Activated CD4-positive, alpha-beta T cell treated with anti-CD3 and anti-CD28 coated beads, Interleukin-2, amount 10 ng/mL, durations not matched to agents 24 days and 14 days (primary cell): ENCODE measurements at regions of chr6 and their contacts with region 1.

Region 1: DNA sequence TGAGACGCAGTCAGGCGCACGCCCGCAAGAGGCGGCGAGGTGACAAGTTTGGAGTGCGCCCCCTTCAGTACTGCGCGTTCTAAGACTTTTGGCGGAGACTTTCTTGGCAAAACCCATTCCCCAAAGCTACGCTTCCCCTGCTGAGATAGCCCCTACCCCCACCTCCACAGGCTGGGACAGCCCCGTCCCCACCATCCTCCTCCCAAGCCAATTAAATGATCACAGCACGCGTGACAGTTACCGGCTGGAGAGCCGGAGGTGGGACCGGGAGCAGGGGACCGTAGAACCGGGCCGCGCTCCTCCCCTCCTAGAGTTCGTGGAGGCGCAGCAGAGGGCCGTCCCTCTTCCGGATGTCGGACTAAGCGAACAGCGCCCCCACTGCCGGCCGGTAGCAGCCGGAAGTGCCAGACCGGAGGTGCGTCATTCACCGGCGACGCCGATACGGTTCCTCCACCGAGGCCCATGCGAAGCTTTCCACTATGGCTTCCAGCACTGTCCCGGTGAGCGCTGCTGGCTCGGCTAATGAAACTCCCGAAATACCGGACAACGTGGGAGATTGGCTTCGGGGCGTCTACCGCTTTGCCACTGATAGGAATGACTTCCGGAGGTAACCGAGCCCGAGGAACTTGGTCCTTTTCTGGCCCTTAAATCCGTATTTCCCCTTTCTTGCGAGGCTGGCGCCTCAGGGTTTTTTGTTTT is at the start of gene TOMM6:
- DNase-seq: peak; percentile 99
- H3K4me3 Mint-ChIP-seq: peak within 1 kb of the TSS; percentile 95
- H3K27ac Mint-ChIP-seq: peak within 1 kb of the TSS; percentile 98
- H3K4me1 Mint-ChIP-seq: peaks cover 12% of the 10 kb centered on the region
- H3K27me3 Mint-ChIP-seq: peaks cover 12% of the 10 kb centered on the region
- total RNA-seq, gene TOMM6: 367 and 376 TPM in 2 replicates

Region 2: DNA sequence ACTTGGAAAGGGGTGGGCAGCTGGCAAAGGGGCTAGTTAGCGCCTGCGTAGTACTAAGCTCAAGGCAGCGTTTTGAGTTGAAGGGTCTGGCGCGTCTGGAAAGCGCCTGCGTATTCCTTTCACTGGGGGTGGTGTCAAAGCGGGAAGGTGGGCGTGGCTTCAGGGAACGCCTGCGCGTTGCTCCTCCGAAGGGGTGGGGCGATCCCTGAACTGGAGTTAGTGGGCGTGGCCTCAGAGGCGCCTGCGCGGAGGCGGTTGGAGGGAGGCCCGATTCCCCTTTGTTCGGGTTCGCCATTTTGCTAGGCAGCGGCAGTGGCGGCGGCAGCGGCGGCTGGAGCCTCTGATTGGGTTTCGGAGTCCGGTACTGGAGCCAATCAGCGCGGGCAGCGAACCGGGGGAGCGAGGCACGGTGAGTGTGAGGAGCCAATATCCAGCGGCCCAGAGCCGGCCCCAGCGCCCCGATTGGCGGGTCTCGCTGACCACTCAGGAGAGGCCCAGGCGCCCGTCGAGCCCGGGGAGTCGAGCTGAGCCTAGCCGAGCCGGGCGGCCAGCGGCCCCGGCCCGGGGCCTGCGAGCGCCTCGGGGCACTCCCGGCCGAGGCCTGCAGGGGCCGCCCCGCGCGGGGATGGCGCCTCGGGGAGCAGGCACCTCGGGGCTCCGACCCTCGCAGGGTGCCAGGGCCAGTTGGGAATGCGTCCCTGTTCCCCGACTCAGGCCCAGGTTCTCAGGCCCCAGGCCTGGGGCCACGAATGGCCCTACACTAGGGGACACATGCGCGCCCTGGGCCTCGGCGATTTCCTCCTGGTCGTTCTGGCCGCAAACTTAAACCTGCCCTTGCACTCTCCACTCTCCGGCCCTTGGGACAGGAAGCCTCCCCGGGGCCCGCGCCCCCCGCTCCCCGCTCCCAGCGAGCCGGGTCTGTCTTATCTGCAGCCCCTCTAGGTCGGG is 714.4 kb before region 1 on chr6 and contains the start of gene NFYA:
- intact Hi-C with region 1: loop called (anchors 5 kb)
- DNase-seq: peak; percentile 100
- H3K4me3 Mint-ChIP-seq: peak within 1 kb of the TSS; percentile 97
- H3K27ac Mint-ChIP-seq: peak within 1 kb of the TSS; percentile 100
- H3K4me1 Mint-ChIP-seq: peaks cover 59% of the 10 kb centered on the region
- H3K27me3 Mint-ChIP-seq: peaks cover 4% of the 10 kb centered on the region
- total RNA-seq, gene NFYA: 31.2 TPM in 2 replicates

Region 3: DNA sequence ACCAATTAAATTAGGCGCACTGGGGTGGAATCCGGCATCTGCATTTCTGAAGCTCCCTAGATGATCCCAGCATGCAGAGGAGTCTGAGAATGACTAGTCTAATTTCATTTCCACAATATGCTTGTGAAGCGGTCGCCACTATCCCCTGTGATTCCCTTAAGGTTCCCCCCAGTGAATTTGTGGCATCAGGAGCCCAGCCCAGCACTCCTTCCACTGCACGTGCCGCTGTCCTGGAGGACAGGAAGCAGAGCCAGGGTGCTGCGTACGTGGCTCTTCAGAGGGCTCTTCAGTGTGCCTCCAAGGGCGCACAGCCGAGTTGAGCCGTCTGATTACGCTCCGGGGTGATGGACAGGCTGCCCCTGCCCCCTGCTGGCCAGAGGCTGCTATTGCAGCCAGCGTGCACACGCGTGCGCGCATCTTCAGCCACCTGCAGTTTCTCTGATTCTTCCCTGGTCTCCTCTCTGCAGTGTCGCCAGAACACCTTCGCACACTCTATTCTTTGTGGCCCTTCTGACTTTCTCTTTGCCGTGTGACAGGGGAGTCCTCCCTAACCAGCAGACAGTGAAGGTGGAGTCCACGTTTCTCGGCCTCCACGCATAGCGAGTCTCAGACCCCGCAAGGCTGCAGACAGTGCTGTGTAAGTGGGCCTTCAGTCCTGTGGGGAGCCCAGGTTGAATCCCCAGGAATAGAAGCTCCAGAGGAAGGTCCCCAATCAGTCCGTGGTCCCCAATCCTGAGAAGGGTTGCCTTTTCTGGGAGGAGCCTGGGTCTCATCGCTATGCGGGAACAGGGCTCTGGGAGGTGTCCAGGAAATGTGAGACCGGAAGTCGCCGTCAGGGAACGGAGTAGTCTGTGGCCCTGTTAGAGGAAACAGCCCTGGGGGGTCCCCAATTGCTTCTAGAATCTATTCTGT is 468.5 kb before region 1 on chr6:
- intact Hi-C with region 1: no loop called
- DNase-seq: peak; percentile 95
- H3K4me3 Mint-ChIP-seq: peak overlapping the region; percentile 68
- H3K27ac Mint-ChIP-seq: peak overlapping the region; percentile 72
- H3K4me1 Mint-ChIP-seq: peaks cover 18% of the 10 kb centered on the region
- H3K27me3 Mint-ChIP-seq: peaks cover 29% of the 10 kb centered on the region

Region 4: DNA sequence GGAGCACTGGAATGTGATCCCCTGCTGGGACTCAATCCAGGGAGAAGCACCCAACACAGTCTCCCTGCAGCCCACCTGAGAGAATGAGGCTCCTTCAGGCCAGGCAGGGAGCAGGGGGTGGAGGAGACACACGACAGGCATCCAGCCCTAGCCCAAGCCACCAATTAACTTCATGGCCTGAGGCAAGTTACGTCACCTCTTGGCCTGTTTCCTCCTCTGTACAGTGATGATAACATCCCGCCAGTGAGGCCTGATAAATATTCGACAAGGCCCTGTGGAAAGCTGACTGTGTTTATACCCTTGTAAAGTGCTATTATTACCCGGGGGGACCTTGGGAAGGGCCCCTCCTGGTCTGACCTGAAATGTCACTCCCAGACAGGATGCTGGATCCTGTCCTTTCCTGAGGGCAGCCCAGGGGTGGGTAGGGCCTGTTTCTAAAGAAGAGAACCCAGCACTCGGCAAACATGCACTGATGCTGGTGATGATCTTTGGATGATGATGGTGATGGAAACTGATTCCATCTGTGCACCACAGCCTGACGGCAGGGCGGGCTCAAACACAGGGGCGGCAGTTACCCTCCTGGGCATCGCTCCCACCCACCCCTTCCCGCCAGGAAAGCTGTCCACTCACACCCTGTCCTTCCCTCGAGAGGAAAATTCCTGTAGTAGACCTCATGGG is 20.1 kb before region 1 on chr6:
- intact Hi-C with region 1: no loop called
- DNase-seq: no peak
- H3K4me3 Mint-ChIP-seq: no peak overlapping the region
- H3K27ac Mint-ChIP-seq: no peak overlapping the region
- H3K4me1 Mint-ChIP-seq: peaks cover 10% of the 10 kb centered on the region
- H3K27me3 Mint-ChIP-seq: peaks cover 1% of the 10 kb centered on the region

Region 5: GRCh38 chr6:41895300-41896233 is 108.2 kb after region 1 on chr6 and contains the start of gene USP49:
- intact Hi-C with region 1: loop called (anchors 1 kb)
- DNase-seq: peak; percentile 97
- H3K4me3 Mint-ChIP-seq: no peak within 1 kb of the TSS
- H3K27ac Mint-ChIP-seq: peak within 1 kb of the TSS; percentile 90
- H3K4me1 Mint-ChIP-seq: peaks cover 12% of the 10 kb centered on the region
- H3K27me3 Mint-ChIP-seq: peaks cover 4% of the 10 kb centered on the region
- total RNA-seq, gene USP49: 5.8 and 6.3 TPM in 2 replicates

Region 6: DNA sequence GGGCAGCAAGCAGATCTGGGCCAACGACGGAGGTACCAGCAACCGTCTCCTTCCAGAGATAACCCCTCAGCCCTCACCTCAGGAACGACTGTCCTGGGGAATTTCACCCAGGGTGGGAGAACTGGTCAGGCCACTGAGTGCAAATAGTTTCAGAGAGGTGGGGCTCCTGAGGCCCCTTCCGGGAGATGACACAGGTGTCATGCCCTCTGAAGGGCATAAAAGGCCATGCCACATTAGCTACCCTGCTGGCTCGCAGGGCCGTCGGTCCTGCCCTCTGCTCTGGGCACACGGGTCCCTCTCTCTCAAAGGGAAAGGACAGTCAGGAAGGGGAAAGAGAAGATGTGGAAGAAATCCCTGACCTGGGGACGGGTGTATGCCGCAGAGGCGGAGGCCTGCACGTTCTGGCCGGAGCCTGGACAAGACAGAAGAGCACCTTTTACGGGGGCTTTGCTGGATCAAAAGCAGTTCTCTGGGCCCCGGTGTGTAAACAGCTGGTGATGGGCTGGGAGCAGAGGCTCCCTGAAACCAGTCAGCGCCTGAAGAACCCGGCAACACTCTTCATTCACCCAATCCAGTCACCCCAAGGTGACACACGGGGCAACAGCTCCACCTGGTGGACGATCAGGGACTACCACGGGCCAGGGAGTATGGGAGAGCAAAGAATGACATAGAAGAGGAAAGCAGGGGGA is 256.6 kb after region 1 on chr6:
- intact Hi-C with region 1: loop called (anchors 1 kb)
- DNase-seq: peak; percentile 98
- H3K4me3 Mint-ChIP-seq: peak overlapping the region; percentile 73
- H3K27ac Mint-ChIP-seq: peak overlapping the region; percentile 74
- H3K4me1 Mint-ChIP-seq: peaks cover 84% of the 10 kb centered on the region
- H3K27me3 Mint-ChIP-seq: no peaks in the 10 kb centered on the region

Region 7: GRCh38 chr6:42563697-42564505 is 776.5 kb after region 1 on chr6 and contains the start of gene UBR2:
- intact Hi-C with region 1: loop called (anchors 1 kb)
- DNase-seq: peak; percentile 98
- H3K4me3 Mint-ChIP-seq: peak within 1 kb of the TSS; percentile 99
- H3K27ac Mint-ChIP-seq: peak within 1 kb of the TSS; percentile 93
- H3K4me1 Mint-ChIP-seq: peaks cover 25% of the 10 kb centered on the region
- H3K27me3 Mint-ChIP-seq: peaks cover 2% of the 10 kb centered on the region
- total RNA-seq, gene UBR2: 30.1 and 30.8 TPM in 2 replicates